OCI-LY7 (cell line): ENCODE measurements at regions of chr14 and their contacts with region 1.

Region 1: DNA sequence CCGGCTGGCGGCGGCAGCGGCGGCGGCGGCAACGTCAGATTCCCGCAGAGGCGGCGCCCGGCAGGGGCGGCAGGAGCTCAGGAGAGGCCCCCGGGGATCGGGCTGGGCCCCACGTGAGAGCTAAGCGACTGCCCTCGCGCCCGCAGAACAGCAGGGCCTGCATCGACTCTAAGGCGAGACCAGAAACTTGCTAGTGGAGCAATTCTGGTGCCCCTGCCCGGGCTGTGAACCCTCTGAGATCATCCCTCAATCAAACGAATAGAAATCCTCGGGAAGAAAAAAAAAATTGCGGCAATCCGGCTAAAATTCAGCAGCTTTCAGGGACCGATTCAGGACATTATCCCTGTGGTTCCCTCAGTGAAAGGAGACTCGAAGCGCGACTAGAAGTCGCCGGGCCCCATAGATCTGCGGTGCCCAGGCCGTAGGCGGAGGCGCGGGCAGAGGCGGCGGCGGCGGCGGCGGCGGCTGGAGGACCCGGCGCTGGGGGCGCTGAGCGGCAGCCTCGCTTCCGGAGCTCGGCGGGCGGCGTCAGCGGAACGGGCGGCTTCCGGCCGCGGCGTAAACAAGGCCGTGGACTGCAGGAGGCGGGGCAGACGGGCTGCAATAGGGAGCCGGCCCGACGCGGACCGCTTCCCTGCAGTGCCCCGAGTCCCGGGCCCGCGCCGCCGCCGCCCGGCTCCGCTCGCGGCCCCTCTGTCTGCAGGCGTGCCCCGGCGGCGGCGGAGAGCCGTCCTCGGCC is at the start of gene KLHDC2:
- DNase-seq: peak; percentile 93
- H3K4me3 ChIP-seq: peak within 1 kb of the TSS; percentile 73
- H3K27ac ChIP-seq: peak within 1 kb of the TSS; percentile 78
- H3K4me1 ChIP-seq: peaks cover 35% of the 10 kb centered on the region
- CTCF ChIP-seq: peak; percentile 75
- total RNA-seq, gene KLHDC2: 55.7 and 68.0 TPM in 2 replicates

Region 2: DNA sequence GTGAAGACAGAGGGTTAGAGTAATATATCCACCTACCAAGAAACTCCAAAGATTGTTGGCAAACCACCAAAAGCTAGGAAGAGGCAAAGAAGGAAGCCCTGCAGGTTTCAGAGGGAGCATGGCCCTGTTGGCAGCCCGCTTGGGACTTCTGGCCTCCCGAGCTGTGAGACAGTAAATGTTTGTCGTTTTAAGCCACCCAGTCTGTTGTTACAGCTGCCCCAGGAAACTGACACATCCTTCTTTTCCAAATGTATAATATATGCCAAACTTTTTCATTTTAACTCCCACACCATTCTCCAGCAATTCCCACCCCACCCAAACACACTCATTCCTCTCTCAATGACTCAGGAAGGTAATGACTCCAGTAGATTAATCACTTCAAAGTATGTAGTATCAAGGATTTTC is 255.6 kb before region 1 on chr14:
- CTCF ChIA-PET with region 1: no interaction called
- POLR2A ChIA-PET with region 1: no interaction called
- intact Hi-C with region 1: no loop called
- DNase-seq: no peak
- H3K4me3 ChIP-seq: no peak overlapping the region
- H3K27ac ChIP-seq: no peak overlapping the region
- H3K4me1 ChIP-seq: no peaks in the 10 kb centered on the region
- CTCF ChIP-seq: no peak

Region 3: GRCh38 chr14:49598485-49599300 is 169.0 kb before region 1 on chr14 and contains the start of gene LRR1:
- CTCF ChIA-PET with region 1: no interaction called
- POLR2A ChIA-PET with region 1: no interaction called
- intact Hi-C with region 1: loop called (anchors 5 kb)
- DNase-seq: peak; percentile 88
- H3K4me3 ChIP-seq: peak within 1 kb of the TSS; percentile 99
- H3K27ac ChIP-seq: peak within 1 kb of the TSS; percentile 94
- H3K4me1 ChIP-seq: peaks cover 40% of the 10 kb centered on the region
- CTCF ChIP-seq: no peak
- total RNA-seq, gene LRR1: 83.4 and 89.8 TPM in 2 replicates

Region 4: GRCh38 chr14:49783394-49784010 is 15.8 kb after region 1 on chr14:
- CTCF ChIA-PET with region 1: no interaction called
- POLR2A ChIA-PET with region 1: interaction called, 24 read pairs
- intact Hi-C with region 1: no loop called
- DNase-seq: no peak
- H3K4me3 ChIP-seq: no peak overlapping the region
- H3K27ac ChIP-seq: no peak overlapping the region
- H3K4me1 ChIP-seq: no peaks in the 10 kb centered on the region
- CTCF ChIP-seq: no peak

Region 5: GRCh38 chr14:49862089-49862673 is 94.5 kb after region 1 on chr14:
- CTCF ChIA-PET with region 1: no interaction called
- POLR2A ChIA-PET with region 1: interaction called, 13 read pairs
- intact Hi-C with region 1: no loop called
- DNase-seq: peak; percentile 89
- H3K4me3 ChIP-seq: peak overlapping the region; percentile 75
- H3K27ac ChIP-seq: peak overlapping the region; percentile 83
- H3K4me1 ChIP-seq: peaks cover 52% of the 10 kb centered on the region
- CTCF ChIP-seq: peak; percentile 100

Region 6: DNA sequence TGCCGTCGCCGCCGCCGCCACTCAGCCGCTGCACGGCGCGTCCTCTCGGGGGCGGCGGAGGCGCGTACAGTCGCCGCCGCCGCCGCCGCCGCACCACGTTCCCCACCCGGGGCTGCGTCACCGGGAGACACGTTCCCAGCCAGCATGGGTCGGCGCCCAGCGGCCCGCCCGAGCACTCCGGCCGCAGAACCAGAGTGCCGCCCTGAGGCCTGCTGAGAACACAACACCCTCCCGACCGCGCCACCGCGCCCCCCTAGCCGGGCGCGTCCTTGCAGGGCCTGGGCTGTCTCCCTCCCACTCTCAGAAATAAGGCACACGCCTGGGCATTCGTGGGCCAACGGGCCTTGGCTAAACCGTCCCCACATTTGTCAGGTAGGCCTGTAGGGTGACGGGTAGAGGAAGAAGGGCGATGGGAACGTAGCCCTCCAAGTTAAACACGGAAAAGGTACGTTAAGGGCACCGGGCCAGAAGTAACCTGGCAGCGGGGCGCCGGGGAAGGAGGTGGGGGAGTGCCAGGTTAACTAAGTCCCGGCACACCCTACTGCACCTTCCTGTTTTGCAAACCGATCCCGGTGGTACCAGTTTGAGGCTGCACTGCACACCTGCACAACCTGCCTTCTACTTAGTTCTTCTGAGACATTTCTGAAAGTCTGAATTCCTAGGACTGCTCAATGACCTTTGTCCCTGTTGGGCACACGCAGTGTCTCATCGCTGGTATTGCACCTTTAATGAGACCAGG is 764.9 kb after region 1 on chr14 and contains the start of gene MAP4K5:
- CTCF ChIA-PET with region 1: no interaction called
- POLR2A ChIA-PET with region 1: no interaction called
- intact Hi-C with region 1: loop called (anchors 2 kb)
- DNase-seq: peak; percentile 93
- H3K4me3 ChIP-seq: peak within 1 kb of the TSS; percentile 89
- H3K27ac ChIP-seq: peak within 1 kb of the TSS; percentile 71
- H3K4me1 ChIP-seq: peaks cover 27% of the 10 kb centered on the region
- CTCF ChIP-seq: peak; percentile 85
- total RNA-seq, gene MAP4K5: 44.0 and 49.8 TPM in 2 replicates